Right ventricle myocardium inferior (tissue), 1 donor: ENCODE measurements at regions of chr7 and their contacts with region 1.

Region 1: DNA sequence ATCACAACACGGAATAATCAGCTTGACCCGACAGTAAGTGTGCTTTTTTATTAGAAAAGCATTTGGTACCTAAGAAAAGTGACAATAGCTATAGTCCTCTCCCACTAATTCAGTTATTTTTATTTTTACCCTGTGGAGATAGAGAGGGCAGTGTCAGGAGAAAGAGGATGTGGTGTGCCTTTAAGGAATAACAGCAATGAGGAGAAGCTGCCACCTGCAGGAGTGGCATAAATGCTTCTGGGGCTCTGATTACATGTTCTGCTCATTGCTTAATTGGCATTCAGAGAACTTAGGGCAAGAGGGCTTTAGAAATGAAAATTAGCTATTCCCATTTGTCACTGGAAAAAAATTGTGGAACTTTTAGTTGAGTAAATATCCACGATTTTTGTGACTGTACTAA is 60.1 kb downstream of the DENND11 start:
- DNase-seq: no peak
- ATAC-seq: peak; percentile 46

Region 2: DNA sequence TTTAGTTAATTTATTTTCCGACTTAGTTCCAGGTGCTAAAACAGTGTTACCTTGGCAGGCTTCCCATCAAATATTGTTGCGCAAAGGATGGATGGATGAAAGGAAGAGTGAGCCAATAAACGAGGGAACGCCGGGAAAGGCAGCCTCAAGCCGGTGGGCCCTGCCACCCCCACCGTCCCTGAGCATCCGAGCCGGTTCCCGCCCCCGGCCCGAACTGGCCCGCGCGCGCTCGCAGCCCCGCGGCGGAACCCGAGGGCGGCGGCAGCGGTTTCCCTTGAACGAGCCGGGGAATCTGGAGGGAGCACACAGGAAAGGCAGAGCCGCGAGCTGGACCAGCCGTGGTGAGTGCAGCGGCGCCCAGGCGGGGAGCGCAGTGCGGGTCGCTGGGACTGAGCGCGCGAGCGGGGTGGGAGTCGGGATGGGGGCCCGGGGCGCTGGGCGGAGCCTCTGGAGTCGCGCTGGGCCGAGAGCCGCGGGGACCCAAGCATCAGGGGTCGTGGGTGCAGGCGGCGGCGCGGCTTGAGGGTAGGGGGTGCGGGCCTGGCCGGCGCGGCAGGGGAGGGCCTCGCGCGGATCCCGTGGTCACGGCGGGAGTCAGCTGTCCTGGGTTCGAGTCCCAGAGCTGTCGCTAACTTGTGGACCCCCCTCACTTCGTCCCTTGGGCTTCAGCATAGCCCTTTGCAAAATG is 90.6 kb before region 1 on chr7 and contains the start of gene AGK:
- intact Hi-C with region 1: loop called (anchors 5 kb)
- DNase-seq: peak; percentile 80
- ATAC-seq: peak; percentile 94
- total RNA-seq, gene AGK: 28.4 TPM

Region 3: DNA sequence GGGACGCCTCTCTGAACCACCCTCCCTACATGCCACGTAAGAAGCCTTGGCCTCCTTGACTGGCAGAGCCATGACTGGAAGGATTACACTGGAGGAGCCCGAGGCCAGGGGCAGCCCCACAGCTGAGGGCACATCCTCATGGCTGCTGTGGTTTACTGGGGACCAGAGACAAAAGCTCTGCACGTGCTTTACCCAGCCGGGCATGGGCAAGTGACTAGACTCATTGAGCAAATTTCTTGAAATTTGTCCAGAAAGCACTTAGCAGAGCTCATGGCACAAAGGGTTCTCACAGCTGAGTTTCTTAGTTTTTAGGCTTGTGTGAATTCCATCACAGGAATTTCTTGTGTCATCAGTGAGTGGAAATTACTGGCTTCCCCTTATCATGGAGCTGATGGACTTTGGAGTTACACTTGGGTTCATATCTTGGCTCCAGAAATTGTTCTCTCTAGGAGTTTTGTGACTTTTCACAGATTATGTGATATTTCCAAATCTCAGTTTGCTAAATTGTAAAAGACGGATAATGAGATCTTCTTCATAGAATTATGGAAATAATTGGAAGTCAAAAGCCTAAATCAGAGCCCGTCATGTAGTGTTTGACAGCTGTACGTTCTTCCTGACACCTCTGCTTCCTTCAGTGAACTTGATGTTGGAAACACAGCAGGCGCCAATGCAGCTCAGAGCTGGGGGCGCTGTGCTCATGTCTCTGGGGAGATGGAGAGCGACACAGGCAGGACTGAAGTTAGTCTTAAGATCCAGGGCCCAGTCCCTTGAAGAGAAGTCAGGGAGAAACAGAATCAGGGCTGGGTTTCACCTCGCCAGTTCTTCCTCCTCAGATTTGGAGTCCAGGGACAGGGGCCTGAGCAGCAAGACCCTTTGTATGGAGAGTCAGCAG is 421.9 kb after region 1 on chr7:
- intact Hi-C with region 1: no loop called
- DNase-seq: no peak
- ATAC-seq: no peak